ENCODE measurements at regions of chr5 and their contacts with region 1.

Region 1: DNA sequence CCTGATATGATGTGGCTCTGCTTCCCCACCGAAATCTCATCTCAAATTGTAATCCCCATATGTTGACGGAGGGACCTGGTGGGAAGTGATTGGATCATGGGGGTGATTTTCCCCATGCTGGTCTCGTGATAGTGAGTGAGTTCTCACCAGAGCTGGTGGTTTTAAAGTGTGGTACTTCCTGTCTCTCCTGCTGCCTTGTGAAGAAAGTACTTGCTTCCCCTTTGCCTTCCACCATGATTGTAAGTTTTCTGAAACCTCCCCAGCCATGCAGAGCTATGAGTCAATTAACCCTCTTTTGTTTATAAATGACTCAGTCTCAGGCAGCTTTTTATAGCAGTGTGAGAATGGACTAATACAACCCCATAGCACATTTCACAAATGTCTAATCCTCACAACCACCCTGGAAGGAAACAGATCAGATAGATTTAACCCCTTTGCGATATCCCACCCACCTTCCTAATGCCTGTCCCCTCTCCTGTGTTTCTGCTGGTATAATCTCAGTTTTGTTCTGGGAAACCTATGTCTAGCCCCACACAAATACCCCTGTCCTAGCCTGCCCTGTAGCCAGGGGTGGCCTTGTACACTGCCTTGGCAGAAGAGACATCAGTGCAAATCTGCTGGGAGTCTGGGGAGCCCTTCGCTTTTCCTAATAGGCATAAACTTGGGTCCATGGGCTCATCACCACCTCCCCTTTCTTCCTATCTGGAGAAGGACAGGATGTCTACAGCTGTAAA is 157.0 kb upstream of the RAI14 start:
- DNase-seq: no peak
- ATAC-seq: peak; percentile 87
- H3K4me3 Mint-ChIP-seq: peak overlapping the region; percentile 48
- H3K27ac Mint-ChIP-seq: peak overlapping the region; percentile 79
- H3K4me1 Mint-ChIP-seq: peaks cover 21% of the 10 kb centered on the region
- H3K27me3 Mint-ChIP-seq: peaks cover 4% of the 10 kb centered on the region
- CTCF ChIP-seq: no peak

Region 2: GRCh38 chr5:34522599-34523386 is 23.6 kb after region 1 on chr5:
- CTCF ChIA-PET with region 1: interaction called, 6 read pairs
- POLR2A ChIA-PET with region 1: no interaction called
- intact Hi-C with region 1: loop called (anchors 1 kb)
- DNase-seq: no peak
- ATAC-seq: peak; percentile 71
- H3K4me3 Mint-ChIP-seq: no peak overlapping the region
- H3K27ac Mint-ChIP-seq: no peak overlapping the region
- H3K4me1 Mint-ChIP-seq: peaks cover 2% of the 10 kb centered on the region
- H3K27me3 Mint-ChIP-seq: no peaks in the 10 kb centered on the region
- CTCF ChIP-seq: no peak

Region 3: GRCh38 chr5:34915139-34915855 is 416.1 kb after region 1 on chr5 and contains the starts of genes BRIX1 and RAD1:
- CTCF ChIA-PET with region 1: no interaction called
- POLR2A ChIA-PET with region 1: interaction called, 20 read pairs
- intact Hi-C with region 1: loop called (anchors 1 kb)
- DNase-seq: peak; percentile 92
- ATAC-seq: peak; percentile 98
- H3K4me3 Mint-ChIP-seq: peak within 1 kb of the TSS; percentile 57
- H3K27ac Mint-ChIP-seq: no peak within 1 kb of the TSS
- H3K4me1 Mint-ChIP-seq: peaks cover 34% of the 10 kb centered on the region
- H3K27me3 Mint-ChIP-seq: no peaks in the 10 kb centered on the region
- CTCF ChIP-seq: no peak
- total RNA-seq, gene BRIX1: 40.6 and 42.4 TPM in 2 replicates
- total RNA-seq, gene RAD1: 20.2 and 24.4 TPM in 2 replicates